Endothelial cell of umbilical vein (primary cell): ENCODE measurements at regions of chr18 and their contacts with region 1.

Region 1: DNA sequence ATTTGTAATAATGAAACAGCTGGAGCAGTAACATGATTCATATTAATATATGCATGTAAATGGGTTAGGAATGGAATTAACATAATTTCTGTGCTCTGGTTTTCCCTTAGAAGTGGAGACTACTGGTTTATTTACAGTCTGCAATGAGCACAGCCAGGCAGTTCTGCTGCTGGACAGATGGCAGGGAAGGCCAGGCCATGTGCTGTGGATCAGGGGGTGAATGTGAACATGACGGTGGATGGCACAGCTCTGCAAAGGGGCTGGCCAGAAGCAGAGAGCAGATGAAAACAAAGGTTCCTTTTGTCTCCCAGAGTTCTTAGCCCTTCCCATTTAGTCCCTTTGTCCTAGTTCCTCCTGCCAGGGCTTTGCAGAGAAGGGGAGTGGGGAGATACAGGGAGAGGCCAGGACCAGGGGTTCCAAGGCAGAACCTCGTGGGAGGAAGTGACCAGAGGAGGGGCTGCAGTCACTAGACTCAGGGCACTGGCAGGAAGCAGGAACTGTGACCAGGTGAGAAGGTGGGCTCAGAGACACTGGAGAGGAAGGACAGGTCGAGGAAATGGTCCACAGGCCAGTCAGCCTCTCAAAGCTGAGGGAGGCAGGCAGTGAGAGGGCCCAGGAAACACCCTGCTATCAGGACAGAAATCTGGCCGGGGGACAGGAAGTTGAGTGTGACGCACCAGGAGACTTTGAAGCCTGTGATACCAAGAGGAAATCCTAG is 112.9 kb upstream of the ATP8B1 start:
- DNase-seq: no peak
- H3K4me3 ChIP-seq: no peak overlapping the region
- H3K27ac ChIP-seq: peak overlapping the region; percentile 24
- H3K4me1 ChIP-seq: peaks cover 9% of the 10 kb centered on the region
- H3K27me3 ChIP-seq: no peaks in the 10 kb centered on the region
- CTCF ChIP-seq: no peak
- POLR2A ChIP-seq: no peak

Region 2: DNA sequence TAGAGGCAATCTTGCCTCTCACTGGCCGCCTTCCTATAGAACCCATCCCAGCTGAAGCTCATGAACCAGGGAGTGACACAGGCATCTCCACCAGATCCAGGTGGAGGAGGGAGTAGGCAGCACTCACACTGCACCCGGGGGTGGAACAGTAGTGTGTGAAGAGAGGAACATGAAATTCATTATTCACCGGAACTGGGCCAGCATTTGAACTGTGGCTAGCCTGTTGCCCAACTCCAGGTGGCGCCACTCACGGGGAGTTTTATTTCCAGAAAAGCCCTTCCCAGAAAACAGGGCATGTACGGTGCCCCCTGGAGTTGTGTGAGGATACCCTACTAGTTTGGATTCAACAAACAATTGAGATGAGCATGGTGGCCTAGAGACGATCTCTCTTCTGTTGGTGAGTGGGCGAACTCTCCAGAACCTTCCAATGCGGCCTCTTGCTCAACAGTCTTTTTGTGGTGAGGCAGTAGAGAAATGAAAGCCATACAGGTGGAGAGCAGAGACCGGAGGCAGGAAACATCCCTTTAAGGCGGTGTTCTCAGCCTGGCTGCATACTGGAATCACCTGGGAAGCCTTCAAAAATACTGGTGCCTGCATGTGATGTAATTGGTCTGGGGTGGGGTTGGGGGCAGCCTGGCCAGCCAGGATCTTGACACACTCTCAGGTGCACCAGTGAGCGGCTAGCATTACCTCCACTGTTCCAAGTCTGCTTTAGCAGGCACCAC is 54.5 kb after region 1 on chr18:
- CTCF ChIA-PET with region 1: no interaction called
- POLR2A ChIA-PET with region 1: no interaction called
- dilution Hi-C with region 1: no loop called
- intact Hi-C with region 1: loop called (anchors 10 kb)
- DNase-seq: no peak
- H3K4me3 ChIP-seq: no peak overlapping the region
- H3K27ac ChIP-seq: no peak overlapping the region
- H3K4me1 ChIP-seq: no peaks in the 10 kb centered on the region
- H3K27me3 ChIP-seq: peaks cover 0 to 12% of the 10 kb centered on the region in 2 experiments
- CTCF ChIP-seq: peak; percentile 19 to 25
- POLR2A ChIP-seq: no peak